IMR-90 (cell line): ENCODE measurements at regions of chr5 and their contacts with region 1.

Region 1: DNA sequence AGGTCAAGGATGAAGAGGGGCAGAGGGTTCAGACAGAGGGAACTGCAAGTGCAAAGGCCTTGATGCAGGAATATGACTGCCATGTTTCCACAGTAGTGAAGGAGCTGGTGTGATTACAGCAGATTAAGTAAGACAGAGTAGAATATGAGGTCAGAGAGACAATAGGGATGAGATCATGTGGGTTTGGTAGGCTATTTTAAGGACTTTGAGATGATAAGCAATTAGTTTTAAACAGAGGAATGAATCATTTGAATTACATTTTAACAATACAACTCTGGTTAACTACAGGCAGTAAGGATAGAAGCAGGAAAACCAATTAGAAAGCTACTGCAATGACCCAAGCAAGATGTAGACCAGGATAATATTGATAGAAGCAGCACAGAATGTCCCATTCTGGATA is 7.7 kb downstream of the CENPK start:
- DNase-seq: peak; percentile 49
- ATAC-seq: no peak
- H3K4me3 ChIP-seq: no peak overlapping the region
- H3K27ac ChIP-seq: no peak overlapping the region
- H3K4me1 ChIP-seq: no peaks in the 10 kb centered on the region
- H3K27me3 ChIP-seq: no peaks in the 10 kb centered on the region
- CTCF ChIP-seq: no peak
- POLR2A ChIP-seq: no peak
- RAD21 ChIP-seq: no peak

Region 2: GRCh38 chr5:65535529-65535987 is 19.7 kb before region 1 on chr5:
- CTCF ChIA-PET with region 1: no interaction called
- POLR2A ChIA-PET with region 1: no interaction called
- dilution Hi-C with region 1: no loop called
- in situ Hi-C with region 1: no loop called
- intact Hi-C with region 1: loop called (anchors 1 kb)
- DNase-seq: peak; percentile 54
- ATAC-seq: peak; percentile 14; the same call in 1 of the 2 replicates
- H3K4me3 ChIP-seq: no peak overlapping the region
- H3K27ac ChIP-seq: no peak overlapping the region
- H3K4me1 ChIP-seq: no peaks in the 10 kb centered on the region
- H3K27me3 ChIP-seq: no peaks in the 10 kb centered on the region
- CTCF ChIP-seq: no peak
- POLR2A ChIP-seq: no peak
- RAD21 ChIP-seq: no peak